Activated CD4-positive, alpha-beta T cell treated with anti-CD3 and anti-CD28 coated beads for 36 hours (primary cell): ENCODE measurements at regions of chr1 and their contacts with region 1.

Region 1: DNA sequence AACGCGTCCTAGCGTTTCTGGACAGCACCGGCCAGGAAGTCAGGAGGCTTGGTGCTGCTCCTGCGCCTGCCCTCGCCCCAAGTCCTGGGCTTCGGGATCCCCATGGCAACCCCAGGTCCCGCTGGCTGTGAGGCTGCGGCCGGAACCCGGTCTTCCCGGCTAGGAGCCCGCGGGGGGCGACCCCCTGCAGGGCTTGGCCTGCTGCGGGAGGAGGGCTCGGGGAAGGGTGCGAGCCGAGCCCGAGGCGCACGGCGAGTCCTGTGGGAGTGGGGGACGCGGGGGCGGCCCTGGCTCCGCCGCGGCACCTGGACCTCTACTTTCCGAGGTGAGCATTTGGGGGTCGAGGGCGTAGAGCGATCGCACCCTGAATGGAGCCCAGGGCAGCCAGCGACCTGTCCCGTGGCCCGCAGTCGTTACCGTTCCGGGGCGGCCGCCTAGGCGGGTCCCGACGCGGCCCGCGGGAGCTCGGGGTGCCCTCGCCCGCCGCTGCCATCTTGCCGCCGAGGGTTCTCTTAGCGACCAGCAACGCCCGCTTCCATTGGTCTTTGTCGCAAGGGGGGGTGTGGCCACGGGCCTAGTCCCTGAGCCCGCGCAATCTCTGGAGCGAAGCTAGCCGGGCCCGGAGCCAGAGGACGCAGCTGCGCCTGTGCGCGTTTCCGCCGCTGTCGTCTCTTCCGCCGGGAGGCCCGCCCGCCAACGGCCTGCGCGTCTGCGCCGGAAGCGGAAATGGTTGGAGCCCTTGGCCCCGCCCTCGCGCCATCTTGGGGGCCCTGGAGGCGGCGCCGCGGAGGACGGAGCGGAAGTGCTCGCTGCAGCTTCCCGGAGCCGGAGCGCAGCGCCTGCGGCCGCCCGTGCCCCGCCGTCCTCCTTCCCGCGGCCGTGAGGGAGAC is at the starts of genes MORN1 and RER1:
- DNase-seq: peak; percentile 100
- ATAC-seq: peak; percentile 99
- H3K4me3 Mint-ChIP-seq: peak within 1 kb of the TSS; percentile 89
- H3K27ac Mint-ChIP-seq: peak within 1 kb of the TSS; percentile 76
- H3K4me1 Mint-ChIP-seq: peaks cover 38% of the 10 kb centered on the region
- H3K27me3 Mint-ChIP-seq: no peaks in the 10 kb centered on the region
- total RNA-seq, gene MORN1: 5.1 to 6.1 TPM
- total RNA-seq, gene RER1: 146 to 152 TPM

Region 2: DNA sequence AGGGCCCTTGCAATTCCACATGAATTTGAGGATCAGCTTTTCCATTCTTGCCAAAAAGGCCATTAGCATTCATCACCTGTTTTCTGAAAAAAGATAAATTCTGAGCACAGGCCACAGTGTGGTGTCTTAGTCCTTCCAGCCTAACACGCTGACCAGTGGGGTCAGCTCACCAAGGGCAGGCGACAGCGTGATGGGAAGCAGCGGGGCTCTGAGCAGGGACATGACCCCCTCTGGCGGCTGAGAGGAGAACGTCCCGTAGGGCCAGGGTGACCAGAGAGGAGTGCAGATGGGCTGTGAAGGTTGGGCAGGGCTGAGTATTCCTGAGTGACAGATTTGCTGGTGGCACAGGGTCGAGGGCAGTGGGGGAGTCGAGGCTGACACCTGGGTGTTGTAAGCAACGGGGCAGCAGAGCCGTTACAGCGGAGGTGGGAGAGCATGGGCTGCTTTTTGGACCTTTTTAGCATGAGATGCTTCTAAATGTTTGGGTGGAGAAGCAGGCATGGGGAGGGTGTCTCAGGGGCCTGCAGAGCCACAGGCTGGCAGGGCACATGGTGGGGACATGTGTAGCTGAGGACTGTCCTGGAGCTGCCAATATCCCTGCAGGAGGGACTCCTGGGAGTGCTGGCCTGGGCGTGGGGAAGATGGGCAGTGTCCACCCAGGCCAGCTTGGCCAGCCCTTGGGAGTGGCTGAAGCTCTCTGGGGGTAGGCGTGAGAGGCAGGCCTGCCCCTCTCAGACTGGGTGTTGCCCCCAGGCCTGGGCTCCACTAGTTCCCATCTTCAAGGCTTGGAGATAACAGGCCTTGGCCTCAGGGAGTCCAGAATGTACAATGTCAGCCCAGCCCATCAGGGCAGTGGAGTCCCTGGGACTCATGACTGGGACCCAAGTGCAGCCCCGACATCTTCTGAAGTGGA is 484.8 kb before region 1 on chr1:
- CTCF ChIA-PET with region 1: no interaction called
- POLR2A ChIA-PET with region 1: no interaction called
- intact Hi-C with region 1: loop called in 1 of 2 experiments (anchors 1 kb)
- DNase-seq: peak; percentile 86
- ATAC-seq: peak; percentile 52
- H3K4me3 Mint-ChIP-seq: peak overlapping the region; percentile 0
- H3K27ac Mint-ChIP-seq: no peak overlapping the region
- H3K4me1 Mint-ChIP-seq: peaks cover 14% of the 10 kb centered on the region
- H3K27me3 Mint-ChIP-seq: no peaks in the 10 kb centered on the region

Region 3: DNA sequence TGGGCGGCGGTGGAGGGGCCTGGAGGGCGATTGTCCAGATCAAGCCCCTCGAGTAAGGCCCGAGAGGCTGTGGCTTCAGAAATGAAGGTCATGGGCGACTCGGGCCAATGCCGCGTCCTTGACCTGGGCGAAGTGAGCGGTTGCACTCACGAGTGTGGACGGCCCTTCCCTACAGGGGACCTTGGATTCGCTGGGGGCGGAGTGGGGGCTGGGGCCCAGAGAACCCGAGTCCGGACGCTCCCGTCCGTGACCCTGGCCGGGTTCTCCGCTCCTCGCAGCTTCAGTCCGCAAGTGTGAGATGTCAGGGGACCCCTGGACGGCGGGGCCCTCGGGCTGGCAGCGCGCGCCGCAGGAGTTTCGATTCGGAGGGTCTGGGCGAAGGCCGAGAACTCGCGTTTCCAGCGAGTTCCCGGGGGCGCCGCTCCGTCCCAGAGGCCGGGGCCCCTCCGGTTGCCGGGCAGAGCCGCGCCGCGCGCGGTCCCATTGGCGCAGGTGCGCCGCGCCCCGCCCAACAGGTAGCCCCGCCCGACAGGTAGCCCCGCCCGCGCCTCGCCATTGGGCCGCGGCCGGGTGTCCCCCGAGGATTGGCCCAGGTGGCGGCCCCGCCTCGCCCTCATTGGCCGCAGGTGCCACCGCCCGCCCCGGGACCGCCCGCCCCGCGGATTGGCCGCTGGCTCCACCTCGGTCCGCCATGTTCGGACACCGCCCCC is 341.4 kb before region 1 on chr1 and contains the start of gene PRKCZ:
- CTCF ChIA-PET with region 1: interaction called, 3 read pairs
- POLR2A ChIA-PET with region 1: no interaction called
- intact Hi-C with region 1: loop called in 1 of 2 experiments (anchors 1 kb)
- DNase-seq: peak; percentile 95
- ATAC-seq: peak; percentile 98
- H3K4me3 Mint-ChIP-seq: peak within 1 kb of the TSS; percentile 68
- H3K27ac Mint-ChIP-seq: no peak within 1 kb of the TSS
- H3K4me1 Mint-ChIP-seq: peaks cover 24% of the 10 kb centered on the region
- H3K27me3 Mint-ChIP-seq: peaks cover 14% of the 10 kb centered on the region
- total RNA-seq, gene PRKCZ: 9.8 to 10.9 TPM

Region 4: DNA sequence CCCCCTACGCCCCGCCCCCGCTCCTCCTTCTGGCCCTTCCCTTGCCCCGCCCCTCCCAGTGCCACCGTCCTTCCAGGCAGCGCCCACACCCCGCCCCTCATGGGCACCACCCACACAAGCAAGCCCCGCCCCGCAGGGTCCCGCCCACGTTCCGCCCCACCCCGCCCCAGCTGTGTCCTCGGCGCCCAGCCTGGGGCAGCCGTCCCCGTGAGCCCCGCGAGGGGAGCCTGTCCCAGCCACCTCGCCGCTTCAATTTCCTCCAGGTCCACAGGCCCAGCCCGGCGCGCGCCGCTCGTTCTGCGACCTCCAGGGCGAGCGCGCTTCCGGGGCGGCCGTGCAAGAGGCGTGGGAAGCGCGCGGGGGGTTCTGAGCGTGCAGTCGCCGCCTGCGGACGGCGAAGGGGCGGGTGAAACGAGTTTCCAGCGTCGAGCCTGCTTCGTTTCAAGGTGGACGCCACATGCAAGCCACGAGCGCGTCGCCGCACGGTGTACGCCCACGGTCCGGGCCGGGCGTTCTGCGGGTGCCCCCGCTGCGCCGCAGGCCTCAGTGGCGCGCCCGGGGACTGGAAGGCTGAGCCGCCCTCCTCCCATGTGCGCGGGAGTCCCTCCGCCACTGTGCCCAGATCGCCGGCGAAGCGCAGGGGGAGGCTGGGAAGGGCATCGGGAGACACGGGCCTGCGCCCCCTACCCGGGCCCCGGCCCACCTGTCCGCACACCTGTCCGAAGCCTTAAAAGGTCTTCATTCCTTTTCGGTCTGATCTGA is 185.9 kb before region 1 on chr1:
- CTCF ChIA-PET with region 1: interaction called, 7 read pairs
- POLR2A ChIA-PET with region 1: interaction called, 3 read pairs
- intact Hi-C with region 1: loop called in 1 of 2 experiments (anchors 1 kb)
- DNase-seq: peak; percentile 98
- ATAC-seq: peak; percentile 88
- H3K4me3 Mint-ChIP-seq: peak overlapping the region; percentile 51
- H3K27ac Mint-ChIP-seq: no peak overlapping the region
- H3K4me1 Mint-ChIP-seq: peaks cover 3% of the 10 kb centered on the region
- H3K27me3 Mint-ChIP-seq: no peaks in the 10 kb centered on the region

Region 5: DNA sequence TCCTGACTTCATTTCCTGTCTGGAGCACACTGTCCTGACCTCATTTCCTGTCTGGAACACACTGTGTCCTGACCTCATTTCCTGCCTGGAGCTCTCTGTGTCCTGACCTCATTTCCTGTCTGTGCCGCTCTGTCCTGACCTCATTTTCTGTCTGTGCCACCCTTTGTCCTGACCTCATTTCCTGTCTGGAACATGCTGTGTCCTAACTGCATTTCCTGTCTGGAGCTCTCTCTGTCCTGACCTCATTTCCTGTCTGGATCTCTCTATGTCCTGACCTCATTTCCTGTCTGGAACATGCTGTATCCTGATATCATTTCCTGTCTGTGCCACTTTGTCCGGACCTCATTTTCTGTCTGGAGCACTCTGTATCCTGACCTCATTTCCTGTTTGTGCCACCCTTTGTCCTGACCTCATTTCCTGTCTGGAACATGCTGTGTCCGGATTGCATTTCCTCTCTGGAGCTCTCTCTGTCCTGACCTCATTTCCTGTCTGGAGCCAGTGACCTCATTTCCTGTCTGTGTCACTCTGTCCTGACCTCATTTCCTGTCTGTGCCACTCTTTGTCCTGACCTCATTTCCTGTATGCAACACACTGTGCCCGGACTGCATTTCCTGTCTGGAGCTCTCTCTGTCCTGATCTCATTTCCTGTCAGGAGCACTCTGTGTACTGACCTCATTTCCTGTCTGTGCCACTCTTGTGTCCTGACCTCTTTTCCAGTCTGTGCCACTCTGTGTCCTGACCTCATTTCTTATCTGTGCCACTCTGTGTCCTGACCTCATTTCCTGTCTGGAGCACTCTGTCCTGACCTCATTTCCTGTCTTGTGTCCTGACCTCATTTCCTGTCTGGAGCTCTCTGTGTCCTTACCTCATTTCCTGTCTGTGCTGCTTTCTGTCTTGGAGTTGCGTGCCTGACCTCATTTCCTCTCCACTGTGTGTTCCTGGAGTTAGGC is 135.6 kb before region 1 on chr1:
- CTCF ChIA-PET with region 1: no interaction called
- POLR2A ChIA-PET with region 1: no interaction called
- intact Hi-C with region 1: loop called in 1 of 2 experiments (anchors 1 kb)
- DNase-seq: peak; percentile 87
- ATAC-seq: peak; percentile 71
- H3K4me3 Mint-ChIP-seq: no peak overlapping the region
- H3K27ac Mint-ChIP-seq: no peak overlapping the region
- H3K4me1 Mint-ChIP-seq: peaks cover 54% of the 10 kb centered on the region
- H3K27me3 Mint-ChIP-seq: no peaks in the 10 kb centered on the region

Region 6: GRCh38 chr1:2270260-2271100 is 120.8 kb before region 1 on chr1:
- CTCF ChIA-PET with region 1: no interaction called
- POLR2A ChIA-PET with region 1: no interaction called
- intact Hi-C with region 1: no loop called
- DNase-seq: no peak
- ATAC-seq: no peak
- H3K4me3 Mint-ChIP-seq: no peak overlapping the region
- H3K27ac Mint-ChIP-seq: no peak overlapping the region
- H3K4me1 Mint-ChIP-seq: peaks cover 47% of the 10 kb centered on the region
- H3K27me3 Mint-ChIP-seq: no peaks in the 10 kb centered on the region

Region 7: GRCh38 chr1:2525920-2526823 is 134.9 kb after region 1 on chr1 and contains the start of gene PANK4:
- CTCF ChIA-PET with region 1: no interaction called
- POLR2A ChIA-PET with region 1: interaction called, 6 read pairs
- intact Hi-C with region 1: loop called in 1 of 2 experiments (anchors 1 kb)
- DNase-seq: peak; percentile 96
- ATAC-seq: peak; percentile 87
- H3K4me3 Mint-ChIP-seq: peak within 1 kb of the TSS; percentile 77
- H3K27ac Mint-ChIP-seq: peak within 1 kb of the TSS; percentile 91
- H3K4me1 Mint-ChIP-seq: peaks cover 43% of the 10 kb centered on the region
- H3K27me3 Mint-ChIP-seq: peaks cover 3% of the 10 kb centered on the region
- total RNA-seq, gene PANK4: 32.4 to 39.2 TPM

Region 8: GRCh38 chr1:3856908-3857790 is 1465.9 kb after region 1 on chr1 and contains the starts of genes CEP104 and DFFB:
- CTCF ChIA-PET with region 1: no interaction called
- POLR2A ChIA-PET with region 1: no interaction called
- intact Hi-C with region 1: loop called in 1 of 2 experiments (anchors 5 kb)
- DNase-seq: peak; percentile 97
- ATAC-seq: peak; percentile 99
- H3K4me3 Mint-ChIP-seq: peak within 1 kb of the TSS; percentile 95
- H3K27ac Mint-ChIP-seq: peak within 1 kb of the TSS; percentile 90
- H3K4me1 Mint-ChIP-seq: peaks cover 31% of the 10 kb centered on the region
- H3K27me3 Mint-ChIP-seq: no peaks in the 10 kb centered on the region
- total RNA-seq, gene CEP104: 33.6 to 35.5 TPM
- total RNA-seq, gene DFFB: 7.2 to 8.4 TPM